HepG2 (cell line): ENCODE measurements at regions of chr3 and their contacts with region 1.

Region 1: GRCh38 chr3:10738688-10739372 is 77.2 kb upstream of the SLC6A11 start:
- DNase-seq: peak; percentile 38
- ATAC-seq: peak; percentile 95
- H3K4me3 ChIP-seq: peak overlapping the region; percentile 26 to 70 (median 51); a peak in 5 of 6 replicates
- H3K27ac ChIP-seq: no peak overlapping the region
- H3K4me1 ChIP-seq: no peaks in the 10 kb centered on the region
- H3K27me3 ChIP-seq: peaks cover 1 to 11% of the 10 kb centered on the region in 2 experiments; a peak in 3 of 5 replicates
- CTCF ChIP-seq: peak; percentile 93
- EP300 ChIP-seq: no peak
- POLR2A ChIP-seq: no peak
- RAD21 ChIP-seq: peak; percentile 78

Region 2: GRCh38 chr3:10344147-10344943 is 394.5 kb before region 1 on chr3:
- CTCF ChIA-PET with region 1: interaction called, 16 read pairs
- POLR2A ChIA-PET with region 1: no interaction called
- in situ Hi-C with region 1: no loop called
- intact Hi-C with region 1: loop called (anchors 5 kb)
- DNase-seq: no peak
- ATAC-seq: peak; percentile 37
- H3K4me3 ChIP-seq: no peak overlapping the region
- H3K27ac ChIP-seq: no peak overlapping the region
- H3K4me1 ChIP-seq: peaks cover 8% of the 10 kb centered on the region
- H3K27me3 ChIP-seq: peaks cover 4 to 22% of the 10 kb centered on the region in 2 experiments; a peak in 4 of 5 replicates
- CTCF ChIP-seq: peak; percentile 85
- EP300 ChIP-seq: no peak
- POLR2A ChIP-seq: no peak
- RAD21 ChIP-seq: peak; percentile 50; the same call in 1 of the 2 replicates

Region 3: GRCh38 chr3:10417849-10418248 is 321.0 kb before region 1 on chr3:
- CTCF ChIA-PET with region 1: interaction called, 17 read pairs
- POLR2A ChIA-PET with region 1: no interaction called
- in situ Hi-C with region 1: loop called (anchors 5 kb)
- intact Hi-C with region 1: loop called (anchors 1 kb)
- DNase-seq: peak; percentile 38
- ATAC-seq: peak; percentile 70
- H3K4me3 ChIP-seq: no peak overlapping the region
- H3K27ac ChIP-seq: no peak overlapping the region
- H3K4me1 ChIP-seq: peaks cover 14% of the 10 kb centered on the region
- H3K27me3 ChIP-seq: no peaks in the 10 kb centered on the region
- CTCF ChIP-seq: peak; percentile 70
- EP300 ChIP-seq: no peak
- POLR2A ChIP-seq: no peak
- RAD21 ChIP-seq: peak; percentile 61; the same call in 1 of the 2 replicates

Region 4: GRCh38 chr3:10518506-10519150 is 220.2 kb before region 1 on chr3:
- CTCF ChIA-PET with region 1: interaction called, 4 read pairs
- POLR2A ChIA-PET with region 1: no interaction called
- in situ Hi-C with region 1: loop called (anchors 10 kb)
- intact Hi-C with region 1: no loop called
- DNase-seq: no peak
- ATAC-seq: no peak
- H3K4me3 ChIP-seq: no peak overlapping the region
- H3K27ac ChIP-seq: no peak overlapping the region
- H3K4me1 ChIP-seq: peaks cover 37% of the 10 kb centered on the region
- H3K27me3 ChIP-seq: peaks cover 1 to 15% of the 10 kb centered on the region in 2 experiments; a peak in 4 of 5 replicates
- CTCF ChIP-seq: no peak
- EP300 ChIP-seq: no peak
- POLR2A ChIP-seq: no peak
- RAD21 ChIP-seq: no peak

Region 5: GRCh38 chr3:10581251-10581650 is 157.6 kb before region 1 on chr3:
- CTCF ChIA-PET with region 1: no interaction called
- POLR2A ChIA-PET with region 1: no interaction called
- in situ Hi-C with region 1: no loop called
- intact Hi-C with region 1: no loop called
- DNase-seq: no peak
- ATAC-seq: no peak
- H3K4me3 ChIP-seq: no peak overlapping the region
- H3K27ac ChIP-seq: no peak overlapping the region
- H3K4me1 ChIP-seq: no peaks in the 10 kb centered on the region
- H3K27me3 ChIP-seq: peaks cover 1 to 6% of the 10 kb centered on the region in 2 experiments; a peak in 2 of 5 replicates
- CTCF ChIP-seq: no peak
- EP300 ChIP-seq: no peak
- POLR2A ChIP-seq: no peak
- RAD21 ChIP-seq: no peak

Region 6: GRCh38 chr3:11001020-11001656 is 262.3 kb after region 1 on chr3:
- CTCF ChIA-PET with region 1: no interaction called
- POLR2A ChIA-PET with region 1: no interaction called
- in situ Hi-C with region 1: no loop called
- intact Hi-C with region 1: no loop called
- DNase-seq: peak; percentile 16
- ATAC-seq: peak; percentile 73
- H3K4me3 ChIP-seq: no peak overlapping the region
- H3K27ac ChIP-seq: no peak overlapping the region
- H3K4me1 ChIP-seq: peaks cover 46% of the 10 kb centered on the region
- H3K27me3 ChIP-seq: peaks cover 0 to 1% of the 10 kb centered on the region in 2 experiments; a peak in 3 of 5 replicates
- CTCF ChIP-seq: no peak
- EP300 ChIP-seq: no peak
- POLR2A ChIP-seq: no peak
- RAD21 ChIP-seq: no peak